Panc1 (cell line): ENCODE measurements at regions of chr5 and their contacts with region 1.

Region 1: DNA sequence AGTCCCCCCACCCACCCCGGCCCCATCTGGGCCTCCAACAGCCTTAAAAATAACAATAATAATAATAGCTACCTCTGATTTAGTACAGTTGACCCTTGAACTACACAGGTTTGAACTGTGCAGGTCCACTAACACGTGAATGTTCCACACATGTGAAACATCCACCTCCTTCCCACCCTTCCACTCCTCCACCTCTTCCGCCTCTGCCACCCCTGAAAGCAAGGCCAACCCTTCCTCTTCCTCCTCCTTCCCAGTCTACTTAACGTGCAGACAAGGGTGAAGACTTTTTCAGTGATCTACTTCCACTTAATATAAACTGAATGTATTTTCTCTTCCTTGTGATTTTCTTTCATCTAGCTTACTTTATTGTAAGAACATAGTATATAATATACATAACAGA is 10.8 kb downstream of the PDGFRB start:
- DNase-seq: no peak
- ATAC-seq: no peak
- H3K4me3 ChIP-seq: no peak overlapping the region
- H3K27ac ChIP-seq: no peak overlapping the region
- H3K4me1 ChIP-seq: peaks cover 18% of the 10 kb centered on the region
- H3K27me3 ChIP-seq: no peaks in the 10 kb centered on the region
- CTCF ChIP-seq: no peak

Region 2: GRCh38 chr5:149930083-149930748 is 214.7 kb before region 1 on chr5:
- CTCF ChIA-PET with region 1: no interaction called
- POLR2A ChIA-PET with region 1: no interaction called
- in situ Hi-C with region 1: no loop called
- intact Hi-C with region 1: no loop called
- DNase-seq: no peak
- ATAC-seq: peak; percentile 66
- H3K4me3 ChIP-seq: peak overlapping the region; percentile 20 to 32
- H3K27ac ChIP-seq: peak overlapping the region; percentile 91
- H3K4me1 ChIP-seq: peaks cover 14% of the 10 kb centered on the region
- H3K27me3 ChIP-seq: no peaks in the 10 kb centered on the region
- CTCF ChIP-seq: no peak

Region 3: DNA sequence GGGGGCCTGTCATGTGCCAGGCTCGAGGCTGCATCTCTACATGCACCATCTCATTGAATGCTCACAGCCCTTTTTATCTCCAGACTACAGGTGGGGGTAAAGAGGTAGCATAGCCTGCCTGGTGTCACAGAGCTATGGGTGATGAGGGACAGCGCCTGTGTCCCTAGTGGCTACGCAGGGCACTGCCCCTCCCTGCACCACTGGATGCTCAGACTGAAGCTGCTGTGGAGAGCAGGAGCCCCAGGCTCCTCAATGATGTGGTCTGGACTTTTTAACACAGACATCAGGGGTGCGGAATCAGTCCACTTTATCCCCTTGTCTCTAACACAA is 142.0 kb after region 1 on chr5:
- CTCF ChIA-PET with region 1: no interaction called
- POLR2A ChIA-PET with region 1: interaction called, 14 read pairs
- in situ Hi-C with region 1: no loop called
- intact Hi-C with region 1: no loop called
- DNase-seq: no peak
- ATAC-seq: peak; percentile 93
- H3K4me3 ChIP-seq: no peak overlapping the region
- H3K27ac ChIP-seq: no peak overlapping the region
- H3K4me1 ChIP-seq: no peaks in the 10 kb centered on the region
- H3K27me3 ChIP-seq: no peaks in the 10 kb centered on the region
- CTCF ChIP-seq: no peak; the same call in 1 of the 2 replicates